Mammary epithelial cell (primary cell): ENCODE measurements at regions of chr1 and their contacts with region 1.

Region 1: DNA sequence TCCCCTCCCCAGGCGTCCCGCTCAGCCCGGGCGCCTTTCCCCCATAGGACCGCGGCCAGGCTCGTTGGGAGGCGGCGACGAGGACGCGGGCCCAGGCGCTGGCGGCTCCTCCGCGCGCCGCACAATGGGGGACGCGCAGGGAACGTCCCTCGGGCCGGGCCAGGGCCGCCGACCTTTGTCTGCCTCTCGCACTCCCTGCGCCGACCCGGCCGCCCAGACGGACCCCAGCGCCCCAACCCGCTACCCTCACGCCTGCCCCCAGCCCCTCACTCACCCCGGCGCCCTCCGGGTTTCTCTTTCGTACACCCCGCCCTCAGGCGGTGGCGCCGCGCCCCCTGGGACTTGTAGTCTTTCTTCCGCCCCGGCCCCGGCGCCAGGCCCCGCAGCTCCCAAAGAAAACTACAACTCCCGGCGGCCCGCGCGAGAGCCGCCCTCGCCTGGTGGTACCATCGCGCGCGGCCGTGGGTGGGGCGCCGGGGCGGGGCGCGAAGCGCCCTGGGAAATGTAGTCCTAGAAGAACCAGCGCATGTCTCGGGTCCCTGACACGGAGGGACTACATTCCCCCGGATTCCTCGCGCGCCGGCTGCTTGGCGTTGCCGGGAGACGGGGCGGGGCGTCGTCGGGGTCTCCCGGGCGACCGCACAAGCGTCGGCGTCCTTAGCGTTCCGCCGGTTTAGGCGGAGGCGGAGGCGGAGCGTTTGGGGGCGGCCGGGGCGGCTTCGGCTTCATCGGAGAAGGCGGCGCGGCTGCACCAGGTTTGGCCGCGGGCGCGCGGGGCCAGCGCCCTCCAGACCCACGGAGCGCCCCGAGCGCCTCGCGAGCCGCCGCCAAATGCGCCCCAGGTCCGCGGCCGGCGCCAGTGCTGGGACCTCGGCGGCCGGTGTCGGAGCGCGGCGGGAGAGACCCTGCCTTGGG is at the start of gene C1orf159:
- DNase-seq: peak; percentile 97
- H3K4me3 ChIP-seq: peak within 1 kb of the TSS; percentile 76 to 94 (median 83)
- H3K27ac ChIP-seq: peak within 1 kb of the TSS; percentile 51
- H3K4me1 ChIP-seq: no peaks in the 10 kb centered on the region
- H3K27me3 ChIP-seq: peaks cover 2% of the 10 kb centered on the region
- CTCF ChIP-seq: no peak
- total RNA-seq, gene C1orf159: 9.5 to 23.8 TPM

Region 2: GRCh38 chr1:983799-984473 is 132.1 kb before region 1 on chr1:
- CTCF ChIA-PET with region 1: no interaction called
- dilution Hi-C with region 1: no loop called
- in situ Hi-C with region 1: no loop called
- intact Hi-C with region 1: loop called (anchors 2 kb)
- DNase-seq: no peak
- H3K4me3 ChIP-seq: no peak overlapping the region
- H3K27ac ChIP-seq: no peak overlapping the region
- H3K4me1 ChIP-seq: no peaks in the 10 kb centered on the region
- H3K27me3 ChIP-seq: peaks cover 2% of the 10 kb centered on the region
- CTCF ChIP-seq: peak; percentile 28 to 86

Region 3: GRCh38 chr1:1019122-1019999 is 96.7 kb before region 1 on chr1:
- CTCF ChIA-PET with region 1: no interaction called
- dilution Hi-C with region 1: no loop called
- in situ Hi-C with region 1: no loop called
- intact Hi-C with region 1: loop called (anchors 10 kb)
- DNase-seq: peak; percentile 78
- H3K4me3 ChIP-seq: peak overlapping the region in 1 of 3 experiments; percentile 48
- H3K27ac ChIP-seq: no peak overlapping the region
- H3K4me1 ChIP-seq: peaks cover 34% of the 10 kb centered on the region
- H3K27me3 ChIP-seq: no peaks in the 10 kb centered on the region
- CTCF ChIP-seq: peak in 1 of 2 donors; percentile 54

Region 4: DNA sequence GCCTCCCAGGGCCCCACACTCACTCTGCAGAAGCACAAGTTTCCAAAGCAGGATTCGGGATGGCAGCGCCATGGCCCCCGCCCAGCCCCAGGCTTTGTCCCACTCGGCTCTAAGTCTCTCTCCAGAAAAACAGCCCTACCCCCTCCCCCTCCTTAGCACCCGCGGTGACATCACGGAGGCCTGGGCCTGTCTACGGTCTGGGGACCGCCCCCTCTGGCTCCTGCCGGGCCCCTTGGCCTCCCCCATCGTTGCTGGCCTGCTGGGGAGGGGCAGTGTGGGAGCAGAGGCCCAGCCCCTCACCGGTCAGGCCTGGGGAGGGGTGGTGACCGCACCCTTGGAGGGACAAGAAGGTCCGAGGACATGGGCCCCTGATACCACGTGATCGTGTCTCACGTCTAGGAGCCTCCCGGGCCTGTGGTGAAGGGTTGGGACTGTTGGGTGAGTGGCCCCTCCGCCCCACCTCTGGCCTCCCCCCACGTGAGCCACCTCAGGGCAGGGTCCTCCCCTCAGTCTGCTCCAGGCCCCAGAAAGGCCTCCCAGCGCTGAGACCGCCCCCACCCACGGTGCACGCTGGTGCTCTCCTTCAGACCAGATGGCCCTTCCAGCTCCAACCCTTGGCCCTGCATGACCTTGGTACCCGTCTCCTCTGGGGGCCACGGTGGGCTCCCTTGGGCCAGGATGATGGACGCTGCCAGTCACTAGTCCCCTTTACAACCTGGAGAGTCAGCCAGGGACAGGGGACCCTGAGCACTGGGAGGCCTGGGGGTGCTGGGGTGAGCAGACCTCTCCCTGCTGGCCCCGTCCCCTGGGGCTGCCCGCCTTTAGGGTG is 242.6 kb after region 1 on chr1 and contains the start of gene MXRA8:
- CTCF ChIA-PET with region 1: no interaction called
- dilution Hi-C with region 1: no loop called
- in situ Hi-C with region 1: no loop called
- intact Hi-C with region 1: no loop called
- DNase-seq: no peak
- H3K4me3 ChIP-seq: no peak within 1 kb of the TSS
- H3K27ac ChIP-seq: no peak within 1 kb of the TSS
- H3K4me1 ChIP-seq: peaks cover 40% of the 10 kb centered on the region
- H3K27me3 ChIP-seq: no peaks in the 10 kb centered on the region
- CTCF ChIP-seq: no peak
- total RNA-seq, gene MXRA8: 6.2 TPM in 1 of 2 donors, not detected in the other